ENCODE measurements at regions of chr12 and their contacts with region 1.

Region 1: DNA sequence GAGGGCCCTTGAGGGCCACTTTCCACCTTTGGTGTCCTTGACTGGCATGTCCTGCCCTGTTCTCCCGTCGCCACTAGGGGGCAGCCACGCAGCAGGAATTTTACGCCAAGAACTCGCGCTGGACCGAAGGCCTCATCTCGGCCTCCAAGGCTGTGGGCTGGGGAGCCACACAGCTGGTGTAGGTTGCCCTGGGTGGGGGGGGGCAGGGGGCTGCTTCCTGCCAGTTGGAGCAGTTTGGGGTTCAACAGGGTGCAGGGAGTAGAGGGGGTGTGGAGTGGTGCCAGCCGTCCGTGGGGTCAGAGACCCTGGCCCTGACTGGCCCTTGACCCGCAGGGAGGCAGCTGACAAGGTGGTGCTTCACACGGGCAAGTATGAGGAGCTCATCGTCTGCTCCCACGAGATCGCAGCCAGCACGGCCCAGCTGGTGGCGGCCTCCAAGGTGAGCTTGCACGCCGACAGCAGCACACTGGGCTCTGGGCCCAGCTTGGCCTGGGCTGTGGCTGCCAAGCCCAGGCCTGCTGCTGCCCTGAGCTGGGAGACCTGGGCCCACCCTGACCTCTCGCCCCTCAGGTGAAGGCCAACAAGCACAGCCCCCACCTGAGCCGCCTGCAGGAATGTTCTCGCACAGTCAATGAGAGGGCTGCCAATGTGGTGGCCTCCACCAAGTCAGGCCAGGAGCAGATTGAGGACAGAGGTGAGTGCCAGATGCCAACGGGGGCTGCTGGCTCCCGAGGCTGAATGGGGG is 25.3 kb downstream of the HIP1R start:
- ATAC-seq: peak; percentile 57 to 75 (median 68)
- H3K4me3 ChIP-seq: peak overlapping the region in 1 of 5 donors; percentile 3
- H3K27ac ChIP-seq: no peak overlapping the region
- H3K4me1 ChIP-seq: peaks cover 6 to 12% of the 10 kb centered on the region in 2 donors

Region 2: GRCh38 chr12:122974274-122974891 is 113.9 kb after region 1 on chr12:
- in situ Hi-C with region 1: loop called in 4 of 9 experiments (anchors 25 kb)
- ATAC-seq: peak; percentile 88 to 95 (median 92)
- H3K4me3 ChIP-seq: peak overlapping the region; percentile 63 to 99 (median 93)
- H3K27ac ChIP-seq: peak overlapping the region; percentile 98 to 99
- H3K4me1 ChIP-seq: peaks cover 6 to 15% of the 10 kb centered on the region in 2 donors

Region 3: GRCh38 chr12:123232807-123233543 is 372.5 kb after region 1 on chr12 and contains the starts of genes MPHOSPH9 and MTRFR:
- in situ Hi-C with region 1: loop called in 1 of 9 experiments (anchors 25 kb)
- ATAC-seq: peak; percentile 92 to 95 (median 95)
- H3K4me3 ChIP-seq: peak within 1 kb of the TSS; percentile 67 to 84 (median 79)
- H3K27ac ChIP-seq: peak within 1 kb of the TSS; percentile 81 to 90
- H3K4me1 ChIP-seq: peaks cover 6 to 16% of the 10 kb centered on the region in 2 donors
- total RNA-seq, gene MPHOSPH9: 24.8 to 88.3 (median 35.8) TPM
- total RNA-seq, gene MTRFR: 11.8 to 28.1 (median 19.0) TPM

Measured in motor neuron (in vitro differentiated cells).